ENCODE measurements at regions of chr1 and their contacts with region 1.

Region 1: DNA sequence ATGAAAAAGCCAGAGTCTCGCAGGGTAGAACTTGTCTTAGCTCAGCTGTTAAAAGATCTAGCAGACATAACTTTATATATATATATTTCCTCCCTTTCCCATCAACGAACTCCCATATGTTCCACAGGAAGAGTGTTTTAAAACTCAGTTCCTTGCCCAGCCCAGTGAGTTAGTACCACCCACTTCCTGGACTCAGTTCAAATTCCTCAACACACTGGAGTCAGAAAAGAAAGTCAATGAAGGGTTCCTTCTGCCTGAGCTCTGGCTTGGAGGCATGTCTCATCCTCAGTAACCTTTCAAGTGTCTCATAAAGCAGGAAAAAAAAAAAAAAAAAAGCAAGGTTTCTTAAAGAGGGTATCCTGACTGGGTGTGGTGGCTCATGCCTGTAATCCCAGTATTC is 15.6 kb downstream of the TPM3 start:
- DNase-seq: no peak

Region 2: GRCh38 chr1:153990468-153991150 is 185.7 kb before region 1 on chr1 and contains the start of gene RPS27:
- intact Hi-C with region 1: loop called in 1 of 2 experiments (anchors 10 kb)
- DNase-seq: peak; percentile 93
- total RNA-seq, gene RPS27: 1,661 to 1,802 TPM

Measured in posterior vena cava (tissue), 2 donors.